ENCODE measurements at regions of chr2 and their contacts with region 1.

Region 1: GRCh38 chr2:130797493-130798435 is 39.0 kb upstream of the ARHGEF4 start:
- DNase-seq: peak; percentile 94
- ATAC-seq: peak; percentile 76
- H3K4me3 Mint-ChIP-seq: peak overlapping the region; percentile 76
- H3K27ac Mint-ChIP-seq: no peak overlapping the region
- H3K4me1 Mint-ChIP-seq: peaks cover 20% of the 10 kb centered on the region
- H3K27me3 Mint-ChIP-seq: peaks cover 20% of the 10 kb centered on the region
- CTCF ChIP-seq: peak; percentile 82

Region 2: DNA sequence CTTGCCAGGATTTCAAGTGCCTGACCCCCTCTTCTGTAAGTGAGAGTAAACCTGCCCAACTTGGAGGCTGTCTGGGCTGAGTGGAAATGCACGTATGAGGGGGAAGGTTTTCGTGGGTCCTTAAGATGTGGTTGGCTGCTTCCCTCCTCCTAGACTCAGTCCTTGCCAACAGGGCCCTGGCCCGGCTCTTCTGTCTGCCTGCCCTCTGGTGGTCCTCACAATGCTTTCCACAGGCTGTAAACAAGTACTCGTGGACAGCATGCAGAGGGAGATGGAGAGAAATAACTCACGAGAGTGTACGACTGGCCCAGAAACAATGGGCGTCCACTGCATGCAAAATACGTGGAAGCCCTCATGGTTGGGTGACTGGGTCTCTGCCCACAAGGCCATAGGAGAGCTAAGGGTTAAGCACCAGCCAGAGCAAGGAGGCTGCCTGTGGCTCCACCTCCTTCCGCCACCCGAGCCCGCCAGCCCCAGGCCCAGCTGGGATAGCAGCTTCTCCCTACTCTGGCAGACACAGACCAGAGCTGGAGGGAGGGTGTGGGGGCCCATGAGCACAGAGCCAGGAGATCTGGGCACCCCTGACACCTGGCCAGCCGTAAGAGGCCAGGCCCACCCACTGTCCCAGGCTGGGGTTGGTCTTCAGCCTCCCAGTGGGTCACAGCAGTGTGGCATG is 22.0 kb after region 1 on chr2:
- CTCF ChIA-PET with region 1: interaction called, 11 read pairs
- POLR2A ChIA-PET with region 1: no interaction called
- DNase-seq: peak; percentile 46
- ATAC-seq: peak; percentile 84
- H3K4me3 Mint-ChIP-seq: no peak overlapping the region
- H3K27ac Mint-ChIP-seq: peak overlapping the region; percentile 84; the same call in 1 of the 2 replicates
- H3K4me1 Mint-ChIP-seq: peaks cover 19% of the 10 kb centered on the region
- H3K27me3 Mint-ChIP-seq: peaks cover 3% of the 10 kb centered on the region; the same call in 1 of the 2 replicates
- CTCF ChIP-seq: no peak

Region 3: DNA sequence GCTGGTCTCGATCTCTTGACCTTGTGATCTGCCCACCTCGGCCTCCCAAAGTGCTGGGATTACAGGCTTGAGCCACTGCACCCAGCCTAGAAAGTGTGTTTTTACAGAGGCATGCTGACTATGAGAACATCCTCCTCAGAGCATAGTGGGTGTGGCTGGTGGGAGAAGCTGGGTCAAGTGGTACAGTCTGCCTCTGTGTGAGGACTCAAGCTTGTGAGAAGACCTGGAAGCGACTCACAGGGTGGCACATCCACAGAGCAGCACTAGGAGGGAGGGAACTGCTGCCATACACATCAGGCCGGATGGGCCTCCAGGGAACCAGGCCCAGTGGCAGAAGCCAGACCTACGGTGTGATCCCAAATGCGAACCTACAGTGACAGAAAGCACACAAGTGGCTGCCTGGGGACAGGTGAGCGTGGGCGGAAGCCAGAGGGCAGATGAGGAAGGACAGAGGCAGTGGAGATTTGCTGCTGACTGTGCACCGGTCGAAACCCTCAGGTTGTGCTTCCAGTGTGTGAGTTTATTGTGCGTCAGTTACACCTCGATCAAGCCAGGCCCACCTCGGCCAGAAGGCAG is 47.8 kb after region 1 on chr2:
- CTCF ChIA-PET with region 1: interaction called, 14 read pairs
- POLR2A ChIA-PET with region 1: no interaction called
- DNase-seq: no peak
- ATAC-seq: no peak
- H3K4me3 Mint-ChIP-seq: no peak overlapping the region
- H3K27ac Mint-ChIP-seq: no peak overlapping the region
- H3K4me1 Mint-ChIP-seq: peaks cover 13% of the 10 kb centered on the region
- H3K27me3 Mint-ChIP-seq: no peaks in the 10 kb centered on the region
- CTCF ChIP-seq: no peak

Region 4: GRCh38 chr2:130920415-130921163 is 122.8 kb after region 1 on chr2:
- CTCF ChIA-PET with region 1: interaction called, 36 read pairs
- POLR2A ChIA-PET with region 1: no interaction called
- DNase-seq: peak; percentile 92
- ATAC-seq: peak; percentile 77
- H3K4me3 Mint-ChIP-seq: no peak overlapping the region
- H3K27ac Mint-ChIP-seq: no peak overlapping the region
- H3K4me1 Mint-ChIP-seq: peaks cover 16% of the 10 kb centered on the region
- H3K27me3 Mint-ChIP-seq: no peaks in the 10 kb centered on the region
- CTCF ChIP-seq: peak; percentile 86

Region 5: GRCh38 chr2:130996691-130997090 is 198.9 kb after region 1 on chr2:
- CTCF ChIA-PET with region 1: interaction called, 10 read pairs
- POLR2A ChIA-PET with region 1: no interaction called
- DNase-seq: no peak
- ATAC-seq: no peak
- H3K4me3 Mint-ChIP-seq: no peak overlapping the region
- H3K27ac Mint-ChIP-seq: no peak overlapping the region
- H3K4me1 Mint-ChIP-seq: peaks cover 6% of the 10 kb centered on the region
- H3K27me3 Mint-ChIP-seq: no peaks in the 10 kb centered on the region
- CTCF ChIP-seq: no peak

Region 6: GRCh38 chr2:131168538-131168937 is 370.8 kb after region 1 on chr2:
- CTCF ChIA-PET with region 1: no interaction called
- POLR2A ChIA-PET with region 1: no interaction called
- DNase-seq: no peak
- ATAC-seq: no peak
- H3K4me3 Mint-ChIP-seq: no peak overlapping the region
- H3K27ac Mint-ChIP-seq: no peak overlapping the region
- H3K4me1 Mint-ChIP-seq: peaks cover 3% of the 10 kb centered on the region; the same call in 1 of the 2 replicates
- H3K27me3 Mint-ChIP-seq: no peaks in the 10 kb centered on the region
- CTCF ChIP-seq: no peak